ENCODE measurements at regions of chr2 and their contacts with region 1.

Region 1: DNA sequence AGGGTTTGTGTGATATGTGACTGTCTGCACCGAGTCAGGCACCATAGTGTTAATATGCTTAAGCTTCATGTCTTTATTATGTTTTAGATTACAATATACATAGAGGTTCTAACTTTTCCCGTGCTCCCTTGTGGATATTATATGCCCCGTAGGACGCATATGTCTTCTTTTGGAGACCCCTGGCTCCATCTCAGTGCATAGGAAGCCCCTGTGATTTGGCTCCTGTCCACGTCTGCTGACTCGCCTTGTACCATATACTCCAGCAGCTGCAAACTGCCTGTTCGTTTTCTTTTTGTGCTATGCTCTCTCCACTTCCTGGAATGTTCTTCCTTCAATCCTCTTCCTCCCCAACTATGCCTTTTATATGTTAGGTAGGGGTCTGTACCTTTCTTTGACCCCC is 110.9 kb downstream of the PTRHD1 start:
- DNase-seq: no peak
- ATAC-seq: no peak
- H3K4me3 ChIP-seq: no peak overlapping the region
- H3K27ac ChIP-seq: no peak overlapping the region
- H3K4me1 ChIP-seq: no peaks in the 10 kb centered on the region
- H3K27me3 ChIP-seq: no peaks in the 10 kb centered on the region
- CTCF ChIP-seq: no peak

Region 2: DNA sequence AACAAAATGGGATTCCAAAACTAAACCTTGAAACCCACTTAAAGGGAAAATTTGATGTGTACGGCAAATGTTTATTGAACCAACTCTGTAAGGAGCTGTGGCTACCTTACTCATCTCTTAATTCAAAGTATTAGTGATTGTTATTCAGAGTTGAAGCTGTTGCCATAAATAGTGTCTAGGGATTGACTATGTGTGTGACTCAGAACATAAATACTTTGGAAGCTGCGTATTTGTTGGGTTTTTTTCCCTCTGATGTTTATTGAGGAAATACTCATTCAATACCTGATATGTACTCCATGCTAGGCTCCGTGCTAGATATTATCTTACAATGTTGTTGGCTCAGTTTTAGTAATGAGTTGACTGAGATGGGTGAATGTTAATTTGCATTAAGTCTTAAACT is 20.5 kb after region 1 on chr2:
- CTCF ChIA-PET with region 1: no interaction called
- POLR2A ChIA-PET with region 1: interaction called, 10 read pairs
- intact Hi-C with region 1: no loop called
- DNase-seq: peak; percentile 93
- ATAC-seq: peak; percentile 100
- H3K4me3 ChIP-seq: no peak overlapping the region
- H3K27ac ChIP-seq: peak overlapping the region; percentile 62
- H3K4me1 ChIP-seq: peaks cover 14% of the 10 kb centered on the region
- H3K27me3 ChIP-seq: no peaks in the 10 kb centered on the region
- CTCF ChIP-seq: no peak